ENCODE measurements at regions of chr1 and their contacts with region 1.

Region 1: GRCh38 chr1:9101510-9102146 is 27.3 kb downstream of the GPR157 start:
- DNase-seq: peak in 1 of 2 donors; percentile 41
- ATAC-seq: peak in 6 of 8 donors; percentile 57 to 69 (median 64)
- H3K4me3 ChIP-seq: no peak overlapping the region
- H3K27ac ChIP-seq: no peak overlapping the region
- H3K4me1 ChIP-seq: peaks cover 0 to 11% (median 0%) of the 10 kb centered on the region in 9 donors
- H3K27me3 ChIP-seq: no peaks in the 10 kb centered on the region
- CTCF ChIP-seq: peak; percentile 29 to 75 (median 64)

Region 2: DNA sequence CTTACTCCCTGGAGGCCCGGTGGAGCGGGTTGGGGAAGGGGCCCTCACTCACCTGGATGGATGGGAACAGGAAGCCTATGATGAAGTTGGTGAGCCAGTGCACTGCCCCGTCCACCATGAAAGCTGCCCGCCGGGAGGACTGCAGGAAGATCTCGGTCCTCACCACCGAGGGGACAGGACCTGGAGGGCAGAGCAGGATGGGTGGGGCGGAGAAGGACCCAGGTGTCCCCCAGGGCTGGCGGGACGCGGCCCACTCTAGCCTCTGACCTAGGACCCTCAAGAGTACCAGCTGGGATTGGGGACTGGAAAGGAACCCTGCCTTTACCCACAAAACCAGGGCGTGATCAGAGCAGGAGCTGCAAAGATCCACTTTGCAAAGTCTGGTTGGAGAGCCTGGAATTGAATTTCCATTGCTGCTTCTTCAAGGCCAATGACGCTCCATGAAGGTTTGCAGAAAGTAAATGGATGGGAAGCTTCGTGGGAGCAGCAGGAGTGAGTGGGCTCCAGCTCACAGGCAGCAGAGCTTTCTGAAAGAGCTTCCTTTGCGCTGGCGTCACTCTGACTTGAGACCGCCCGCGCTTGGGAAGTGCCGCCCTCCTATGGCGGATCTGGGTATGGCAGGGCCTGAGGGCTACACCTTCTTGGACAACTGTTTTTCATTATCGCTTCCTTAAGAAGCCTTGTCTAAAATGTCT is 96.8 kb before region 1 on chr1:
- intact Hi-C with region 1: loop called (anchors 5 to 10 kb)
- DNase-seq: peak; percentile 71 to 82
- ATAC-seq: peak; percentile 7 to 88 (median 81)
- H3K4me3 ChIP-seq: no peak overlapping the region
- H3K27ac ChIP-seq: no peak overlapping the region
- H3K4me1 ChIP-seq: peaks cover 0 to 8% (median 0%) of the 10 kb centered on the region in 9 donors
- H3K27me3 ChIP-seq: no peaks in the 10 kb centered on the region
- CTCF ChIP-seq: peak; percentile 75 to 98 (median 96)

Region 3: GRCh38 chr1:9145021-9145668 is 43.5 kb after region 1 on chr1:
- intact Hi-C with region 1: no loop called
- DNase-seq: no peak
- ATAC-seq: no peak
- H3K4me3 ChIP-seq: no peak overlapping the region
- H3K27ac ChIP-seq: no peak overlapping the region
- H3K4me1 ChIP-seq: peaks cover 8 to 31% (median 17%) of the 10 kb centered on the region in 9 donors
- H3K27me3 ChIP-seq: no peaks in the 10 kb centered on the region
- CTCF ChIP-seq: no peak

Measured in heart right ventricle (tissue), 16 donors.